ACHN (cell line): ENCODE measurements at regions of chr1 and their contacts with region 1.

Region 1: GRCh38 chr1:212595787-212596714 is 12.5 kb upstream of the ATF3 start:
- DNase-seq: peak; percentile 92

Region 2: DNA sequence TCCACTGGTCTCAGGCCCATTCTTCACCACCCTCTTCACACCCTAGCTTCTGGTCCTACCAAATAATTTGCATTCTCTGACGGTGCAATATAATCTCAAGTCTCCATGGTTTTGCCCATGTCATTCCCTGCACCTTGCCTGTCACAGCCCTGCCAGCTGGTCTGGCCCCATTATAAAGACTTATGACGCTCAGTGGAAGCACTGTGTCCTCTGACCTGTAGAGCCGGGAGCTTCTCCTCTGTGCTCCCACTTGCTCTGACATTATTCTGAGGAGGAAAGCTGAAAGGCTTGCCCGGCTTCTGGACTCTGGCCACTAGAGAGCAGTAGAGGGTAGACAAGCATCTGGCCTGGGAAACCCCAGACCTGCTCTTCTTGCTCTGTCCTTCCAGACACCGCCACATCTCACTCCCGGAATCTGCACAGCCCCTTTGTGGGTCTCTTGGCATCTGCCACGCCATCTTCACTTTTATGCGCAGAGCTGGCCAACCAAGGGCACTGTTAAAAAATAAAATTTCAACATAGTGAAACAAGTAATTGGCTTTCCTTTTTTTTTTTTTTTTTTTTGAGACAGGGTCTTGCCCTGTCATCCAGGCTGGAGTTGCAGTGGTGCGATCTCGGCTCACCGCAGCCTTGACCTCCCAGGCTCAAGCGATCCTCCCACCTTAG is 118.9 kb before region 1 on chr1:
- in situ Hi-C with region 1: loop called (anchors 25 kb)
- DNase-seq: peak; percentile 92

Region 3: GRCh38 chr1:212650228-212650627 is 54.2 kb after region 1 on chr1:
- in situ Hi-C with region 1: no loop called
- DNase-seq: no peak

Region 4: DNA sequence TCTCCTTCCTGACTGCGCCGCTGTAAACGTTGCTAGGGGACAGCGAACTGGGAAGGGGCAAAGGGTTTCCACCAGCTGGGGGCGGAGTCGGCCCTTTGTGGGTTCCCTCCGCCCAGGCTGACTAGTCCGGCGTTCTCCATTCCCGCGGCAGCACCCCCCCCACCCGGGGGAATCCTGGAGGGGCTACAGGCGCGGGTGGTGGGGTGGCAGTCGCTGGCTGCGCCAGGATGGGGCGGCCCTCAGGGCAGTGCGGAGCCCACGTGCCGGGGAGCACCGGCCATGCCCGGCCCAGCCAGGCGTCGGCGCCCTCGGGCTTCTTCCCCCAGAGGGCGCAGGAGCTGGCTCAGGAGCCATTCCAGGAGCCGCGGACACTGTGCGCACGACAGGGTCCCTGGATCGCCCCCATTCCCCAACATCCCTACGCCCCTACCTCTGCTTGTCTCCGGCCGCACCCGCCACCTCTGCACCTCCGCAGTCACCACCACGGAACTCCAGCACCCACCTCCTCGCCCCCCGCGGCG is 103.1 kb after region 1 on chr1:
- in situ Hi-C with region 1: no loop called
- DNase-seq: peak; percentile 76